B cell (primary cell): ENCODE measurements at regions of chr4 and their contacts with region 1.

Region 1: DNA sequence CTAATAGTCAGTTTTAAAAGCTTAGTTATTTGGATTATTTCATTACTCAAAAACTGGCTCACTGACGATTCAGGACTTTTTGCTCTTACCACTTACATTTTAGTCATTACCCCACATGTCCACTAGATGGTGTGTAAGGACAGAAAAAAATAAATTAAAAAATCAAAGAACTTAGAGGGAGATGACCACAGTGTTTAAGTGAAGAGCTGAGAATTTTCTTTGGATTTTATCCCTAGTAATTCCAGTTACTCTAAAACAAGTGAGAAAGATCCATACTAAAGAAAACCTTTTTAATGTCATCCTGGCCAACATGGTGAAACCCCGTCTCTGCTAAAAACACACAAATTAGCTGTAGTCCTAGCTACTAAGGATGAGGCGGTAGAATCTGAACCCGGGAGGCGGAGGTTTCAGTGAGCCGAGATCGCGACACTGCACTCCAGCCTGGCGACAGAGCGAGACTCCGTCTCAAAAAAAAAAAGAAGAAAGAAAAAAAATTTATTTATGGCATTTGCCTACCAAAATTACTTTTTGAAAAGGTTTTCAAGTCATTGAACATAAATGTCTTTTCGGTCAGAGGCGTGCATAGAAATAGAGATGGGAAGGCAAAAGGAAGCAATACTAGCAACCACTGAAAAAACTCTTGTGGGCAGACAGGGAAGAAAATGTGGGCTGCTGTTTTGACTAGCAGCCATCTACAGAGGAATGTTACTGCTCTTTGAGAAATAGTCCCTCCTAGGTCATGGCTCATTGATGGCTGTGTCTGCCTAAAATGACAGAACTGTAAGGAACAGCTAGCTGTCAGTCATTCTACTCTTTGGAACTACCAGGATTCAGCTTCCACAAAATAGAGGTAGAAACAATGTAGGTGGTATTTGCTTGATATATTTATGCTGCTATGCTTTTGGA is 26.6 kb upstream of the TMPRSS11B start:
- DNase-seq: peak; percentile 65
- ATAC-seq: peak; percentile 54
- H3K4me3 ChIP-seq: peak overlapping the region in 2 of 5 experiments; percentile 21 to 22
- H3K4me3 Mint-ChIP-seq: no peak overlapping the region
- H3K27ac ChIP-seq: no peak overlapping the region
- H3K27ac Mint-ChIP-seq: no peak overlapping the region
- H3K4me1 ChIP-seq: peaks cover 4 to 5% of the 10 kb centered on the region in 2 donors
- H3K4me1 Mint-ChIP-seq: peaks cover 16% of the 10 kb centered on the region
- H3K27me3 ChIP-seq: no peaks in the 10 kb centered on the region
- H3K27me3 Mint-ChIP-seq: peaks cover 13% of the 10 kb centered on the region
- CTCF ChIP-seq: peak; percentile 88

Region 2: GRCh38 chr4:67499799-67500198 is 772.3 kb before region 1 on chr4:
- CTCF ChIA-PET with region 1: no interaction called
- POLR2A ChIA-PET with region 1: no interaction called
- intact Hi-C with region 1: no loop called
- DNase-seq: no peak
- ATAC-seq: no peak
- H3K4me3 ChIP-seq: no peak overlapping the region
- H3K4me3 Mint-ChIP-seq: no peak overlapping the region
- H3K27ac ChIP-seq: no peak overlapping the region
- H3K27ac Mint-ChIP-seq: no peak overlapping the region
- H3K4me1 ChIP-seq: no peaks in the 10 kb centered on the region
- H3K4me1 Mint-ChIP-seq: no peaks in the 10 kb centered on the region
- H3K27me3 ChIP-seq: no peaks in the 10 kb centered on the region
- H3K27me3 Mint-ChIP-seq: no peaks in the 10 kb centered on the region
- CTCF ChIP-seq: no peak

Region 3: GRCh38 chr4:68175562-68176155 is 96.4 kb before region 1 on chr4:
- CTCF ChIA-PET with region 1: no interaction called
- POLR2A ChIA-PET with region 1: no interaction called
- intact Hi-C with region 1: no loop called
- DNase-seq: peak; percentile 60
- ATAC-seq: peak; percentile 45
- H3K4me3 ChIP-seq: no peak overlapping the region
- H3K4me3 Mint-ChIP-seq: no peak overlapping the region
- H3K27ac ChIP-seq: no peak overlapping the region
- H3K27ac Mint-ChIP-seq: no peak overlapping the region
- H3K4me1 ChIP-seq: no peaks in the 10 kb centered on the region
- H3K4me1 Mint-ChIP-seq: no peaks in the 10 kb centered on the region
- H3K27me3 ChIP-seq: no peaks in the 10 kb centered on the region
- H3K27me3 Mint-ChIP-seq: peaks cover 3% of the 10 kb centered on the region
- CTCF ChIP-seq: peak; percentile 73

Region 4: GRCh38 chr4:68240618-68241017 is 31.5 kb before region 1 on chr4:
- CTCF ChIA-PET with region 1: no interaction called
- POLR2A ChIA-PET with region 1: no interaction called
- intact Hi-C with region 1: no loop called
- DNase-seq: no peak
- ATAC-seq: no peak
- H3K4me3 ChIP-seq: no peak overlapping the region
- H3K4me3 Mint-ChIP-seq: no peak overlapping the region
- H3K27ac ChIP-seq: no peak overlapping the region
- H3K27ac Mint-ChIP-seq: no peak overlapping the region
- H3K4me1 ChIP-seq: no peaks in the 10 kb centered on the region
- H3K4me1 Mint-ChIP-seq: no peaks in the 10 kb centered on the region
- H3K27me3 ChIP-seq: no peaks in the 10 kb centered on the region
- H3K27me3 Mint-ChIP-seq: peaks cover 17% of the 10 kb centered on the region
- CTCF ChIP-seq: no peak

Region 5: GRCh38 chr4:68375667-68376559 is 103.8 kb after region 1 on chr4:
- CTCF ChIA-PET with region 1: interaction called, 88 read pairs
- POLR2A ChIA-PET with region 1: interaction called, 6 read pairs
- intact Hi-C with region 1: loop called (anchors 1 kb)
- DNase-seq: peak; percentile 74
- ATAC-seq: peak; percentile 76
- H3K4me3 ChIP-seq: peak overlapping the region in 4 of 5 experiments; percentile 5 to 63 (median 41)
- H3K4me3 Mint-ChIP-seq: peak overlapping the region; percentile 83
- H3K27ac ChIP-seq: no peak overlapping the region
- H3K27ac Mint-ChIP-seq: peak overlapping the region; percentile 5
- H3K4me1 ChIP-seq: peaks cover 0 to 6% of the 10 kb centered on the region in 2 donors
- H3K4me1 Mint-ChIP-seq: peaks cover 11% of the 10 kb centered on the region
- H3K27me3 ChIP-seq: peaks cover 0 to 6% (median 2%) of the 10 kb centered on the region in 4 experiments
- H3K27me3 Mint-ChIP-seq: peaks cover 22% of the 10 kb centered on the region
- CTCF ChIP-seq: peak; percentile 87

Region 6: DNA sequence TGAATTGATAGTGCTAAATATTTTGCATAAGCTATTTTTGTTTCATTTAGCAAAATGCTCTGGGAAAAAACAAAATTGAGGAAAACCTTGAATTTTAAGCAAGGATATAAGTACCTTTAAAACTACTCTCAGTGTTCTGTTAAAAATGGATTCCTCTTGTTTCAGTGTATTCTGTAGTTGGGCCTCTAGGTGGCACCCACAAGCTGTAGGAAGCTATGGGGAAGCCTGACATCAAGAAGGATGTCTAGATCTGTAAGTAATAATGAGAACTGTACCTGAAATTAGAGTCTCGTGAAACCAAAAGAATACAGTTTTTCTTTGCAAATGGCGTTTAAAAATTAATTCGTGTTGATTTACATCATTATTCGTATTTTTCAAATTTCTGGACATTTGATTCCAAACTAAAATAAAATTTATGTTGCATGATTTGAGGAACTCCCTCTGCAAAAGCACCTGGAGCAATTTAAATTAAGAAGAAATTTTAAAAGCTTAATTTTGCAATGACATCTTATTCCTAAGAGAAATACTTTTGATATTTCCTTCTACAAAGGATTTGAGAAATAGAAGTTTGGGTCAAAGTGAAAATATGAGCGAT is 226.4 kb after region 1 on chr4:
- CTCF ChIA-PET with region 1: no interaction called
- POLR2A ChIA-PET with region 1: no interaction called
- intact Hi-C with region 1: loop called (anchors 1 kb)
- DNase-seq: peak; percentile 71
- ATAC-seq: peak; percentile 75
- H3K4me3 ChIP-seq: no peak overlapping the region
- H3K4me3 Mint-ChIP-seq: no peak overlapping the region
- H3K27ac ChIP-seq: no peak overlapping the region
- H3K27ac Mint-ChIP-seq: no peak overlapping the region
- H3K4me1 ChIP-seq: peaks cover 7 to 8% of the 10 kb centered on the region in 2 donors
- H3K4me1 Mint-ChIP-seq: peaks cover 10% of the 10 kb centered on the region
- H3K27me3 ChIP-seq: no peaks in the 10 kb centered on the region
- H3K27me3 Mint-ChIP-seq: no peaks in the 10 kb centered on the region
- CTCF ChIP-seq: peak; percentile 96

Region 7: GRCh38 chr4:69881173-69881773 is 1609.2 kb after region 1 on chr4:
- CTCF ChIA-PET with region 1: no interaction called
- POLR2A ChIA-PET with region 1: no interaction called
- intact Hi-C with region 1: loop called (anchors 5 kb)
- DNase-seq: no peak
- ATAC-seq: no peak
- H3K4me3 ChIP-seq: no peak overlapping the region
- H3K4me3 Mint-ChIP-seq: no peak overlapping the region
- H3K27ac ChIP-seq: no peak overlapping the region
- H3K27ac Mint-ChIP-seq: no peak overlapping the region
- H3K4me1 ChIP-seq: no peaks in the 10 kb centered on the region
- H3K4me1 Mint-ChIP-seq: no peaks in the 10 kb centered on the region
- H3K27me3 ChIP-seq: no peaks in the 10 kb centered on the region
- H3K27me3 Mint-ChIP-seq: no peaks in the 10 kb centered on the region
- CTCF ChIP-seq: peak; percentile 6